ENCODE measurements at regions of chr6 and their contacts with region 1.

Region 1: DNA sequence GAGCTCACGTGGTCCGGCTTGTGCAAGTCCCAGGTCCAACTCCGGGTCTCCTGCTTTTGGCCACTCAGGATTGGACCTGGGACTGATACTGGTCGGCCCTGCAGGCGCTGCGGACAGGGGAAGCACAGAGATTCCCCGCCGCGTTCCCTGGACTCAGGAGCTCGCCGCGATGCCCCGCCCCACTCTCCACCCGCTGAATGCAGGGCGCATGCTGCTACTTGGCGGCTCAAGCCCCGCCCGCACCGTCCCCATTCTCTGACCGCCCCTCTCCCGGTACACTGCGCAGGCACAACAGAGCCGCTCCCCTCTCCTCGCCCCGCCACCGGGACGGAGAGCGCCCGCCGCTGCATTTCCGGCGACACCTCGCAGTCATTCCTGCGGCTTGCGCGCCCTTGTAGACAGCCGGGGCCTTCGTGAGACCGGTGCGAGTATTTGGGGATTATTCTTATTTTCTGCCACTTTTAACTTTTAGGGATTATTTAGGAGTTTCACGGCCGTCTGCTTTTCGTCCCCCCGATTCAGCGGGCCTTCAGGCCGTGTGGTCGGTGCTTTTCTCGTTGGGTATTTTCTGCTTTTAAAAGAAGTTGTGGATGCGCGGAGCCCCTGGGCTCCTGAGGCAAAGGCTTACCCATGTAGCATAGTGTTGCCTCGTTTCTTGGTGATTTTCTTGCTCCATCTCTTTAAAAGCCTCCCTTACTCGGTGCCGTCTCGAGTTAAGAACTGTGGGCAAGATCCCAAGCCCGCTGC is at the start of gene TMEM14C:
- DNase-seq: peak; percentile 98 to 99 (median 99)
- H3K4me3 ChIP-seq: peak within 1 kb of the TSS; percentile 91
- H3K27ac ChIP-seq: peak within 1 kb of the TSS in 1 of 2 donors; percentile 73
- H3K4me1 ChIP-seq: peaks cover 10% of the 10 kb centered on the region
- H3K27me3 ChIP-seq: no peaks in the 10 kb centered on the region
- CTCF ChIP-seq: no peak
- EP300 ChIP-seq: no peak
- POLR2A ChIP-seq: no peak
- total RNA-seq, gene TMEM14C: 92.8 to 146 (median 99.4) TPM

Region 2: GRCh38 chr6:10694302-10695085 is 28.5 kb before region 1 on chr6 and contains the starts of genes C6orf52 and PAK1IP1:
- intact Hi-C with region 1: loop called in 1 of 4 experiments (anchors 2 kb)
- DNase-seq: peak; percentile 91 to 94 (median 92)
- H3K4me3 ChIP-seq: peak within 1 kb of the TSS; percentile 75
- H3K27ac ChIP-seq: peak within 1 kb of the TSS; percentile 69 to 90
- H3K4me1 ChIP-seq: peaks cover 7% of the 10 kb centered on the region
- H3K27me3 ChIP-seq: no peaks in the 10 kb centered on the region
- CTCF ChIP-seq: peak in 1 of 3 donors; percentile 26
- EP300 ChIP-seq: peak; percentile 24
- POLR2A ChIP-seq: peak; percentile 88
- total RNA-seq, gene C6orf52: 0.59 to 2.6 (median 2.0) TPM in 3 of 7 donors, not detected in the others
- total RNA-seq, gene PAK1IP1: 5.6 to 21.7 (median 12.4) TPM

Region 3: DNA sequence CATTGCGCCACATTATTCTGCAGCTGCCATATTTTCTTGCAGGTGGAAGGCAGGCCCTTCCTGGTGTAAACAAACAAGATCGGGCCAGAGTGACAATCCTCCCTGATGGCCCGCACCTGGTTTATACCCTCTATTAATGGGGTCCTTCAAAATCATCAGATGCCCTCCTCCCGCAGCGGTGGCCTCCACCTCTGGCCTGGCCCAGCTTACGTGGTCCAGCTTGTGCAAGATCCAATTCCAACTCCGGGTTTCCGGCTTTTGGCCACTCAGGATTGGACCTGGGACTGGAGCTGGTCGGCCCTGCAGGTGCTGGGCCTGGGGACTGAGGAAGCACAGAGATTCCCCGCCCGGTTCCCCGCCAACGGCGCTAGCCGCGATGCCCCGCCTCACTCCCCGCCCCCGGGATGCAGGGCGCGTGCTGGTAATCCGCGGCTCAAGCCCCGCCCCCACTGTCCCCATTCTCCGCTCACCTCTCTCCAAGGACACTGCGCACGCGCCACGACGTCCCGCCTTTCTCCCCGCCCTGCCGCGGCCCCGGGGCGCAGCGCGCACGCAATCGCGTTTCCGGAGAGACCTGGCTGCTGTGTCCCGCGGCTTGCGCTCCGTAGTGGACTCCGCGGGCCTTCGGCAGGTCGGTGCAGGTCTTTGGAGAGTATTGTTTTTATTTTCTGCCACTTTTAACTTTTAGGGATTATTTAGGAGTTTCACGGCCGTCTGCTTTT is 24.4 kb after region 1 on chr6 and contains the start of gene TMEM14B:
- intact Hi-C with region 1: loop called in 1 of 4 experiments (anchors 2 kb)
- DNase-seq: peak; percentile 100
- H3K4me3 ChIP-seq: peak within 1 kb of the TSS; percentile 84
- H3K27ac ChIP-seq: peak within 1 kb of the TSS in 1 of 2 donors; percentile 48
- H3K4me1 ChIP-seq: peaks cover 3% of the 10 kb centered on the region
- H3K27me3 ChIP-seq: no peaks in the 10 kb centered on the region
- CTCF ChIP-seq: no peak
- EP300 ChIP-seq: no peak
- POLR2A ChIP-seq: peak; percentile 62
- total RNA-seq, gene TMEM14B: 64.7 to 82.5 (median 72.4) TPM

Region 4: GRCh38 chr6:10968776-10969175 is 245.8 kb after region 1 on chr6:
- intact Hi-C with region 1: no loop called
- DNase-seq: no peak
- H3K4me3 ChIP-seq: no peak overlapping the region
- H3K27ac ChIP-seq: no peak overlapping the region
- H3K4me1 ChIP-seq: no peaks in the 10 kb centered on the region
- H3K27me3 ChIP-seq: no peaks in the 10 kb centered on the region
- CTCF ChIP-seq: no peak
- EP300 ChIP-seq: no peak
- POLR2A ChIP-seq: no peak